IMR-90 (cell line): ENCODE measurements at regions of chr1 and their contacts with region 1.

Region 1: GRCh38 chr1:171683870-171684269 is 31.4 kb upstream of the MYOC start:
- DNase-seq: no peak
- ATAC-seq: no peak
- H3K4me3 ChIP-seq: no peak overlapping the region
- H3K27ac ChIP-seq: no peak overlapping the region
- H3K4me1 ChIP-seq: no peaks in the 10 kb centered on the region
- H3K27me3 ChIP-seq: no peaks in the 10 kb centered on the region; the same call in 1 of the 2 replicates
- CTCF ChIP-seq: no peak
- POLR2A ChIP-seq: no peak
- RAD21 ChIP-seq: no peak

Region 2: DNA sequence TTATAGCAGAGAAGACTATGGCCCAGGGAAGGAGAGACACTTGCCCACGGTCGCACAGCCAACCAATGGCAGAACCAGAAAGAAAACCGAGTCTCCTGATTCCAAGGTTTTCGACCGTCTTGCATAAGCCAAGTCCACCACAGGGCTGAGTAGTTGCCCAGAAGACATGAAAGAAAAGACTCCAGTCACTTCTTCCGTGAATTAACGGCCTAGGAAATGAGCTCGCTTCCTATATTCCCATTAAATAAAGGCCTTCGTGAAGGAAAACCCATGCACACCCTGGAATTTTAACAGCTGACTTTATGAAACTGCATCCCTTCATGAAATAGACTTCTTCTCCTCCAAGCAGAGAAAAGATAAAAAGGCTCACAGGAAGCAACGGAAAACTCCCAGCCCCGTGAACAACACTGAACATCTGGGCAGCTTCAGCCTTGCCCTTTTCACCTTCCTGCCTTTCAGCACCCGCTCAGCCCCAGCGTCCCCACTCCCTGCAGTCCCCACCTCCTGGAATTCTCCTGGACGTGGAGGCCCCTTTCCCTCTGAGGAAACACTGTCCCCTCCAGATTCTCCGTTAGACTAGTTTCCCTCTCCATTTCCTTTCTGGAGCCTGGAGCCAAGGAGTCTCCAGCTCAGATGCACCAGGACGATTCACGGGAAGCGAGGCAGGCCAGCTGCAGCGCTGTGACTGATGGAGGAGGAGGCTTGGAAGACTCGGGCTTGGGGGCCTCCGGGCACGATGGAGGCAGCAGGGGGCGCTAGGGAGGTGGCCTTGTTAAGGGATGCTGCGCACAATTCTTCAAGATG is 28.7 kb before region 1 on chr1:
- CTCF ChIA-PET with region 1: interaction called, 10 read pairs
- POLR2A ChIA-PET with region 1: no interaction called
- dilution Hi-C with region 1: no loop called
- in situ Hi-C with region 1: no loop called
- intact Hi-C with region 1: no loop called
- DNase-seq: peak; percentile 48
- ATAC-seq: peak; percentile 76
- H3K4me3 ChIP-seq: no peak overlapping the region
- H3K27ac ChIP-seq: no peak overlapping the region
- H3K4me1 ChIP-seq: peaks cover 8% of the 10 kb centered on the region
- H3K27me3 ChIP-seq: peaks cover 3% of the 10 kb centered on the region
- CTCF ChIP-seq: peak; percentile 58
- POLR2A ChIP-seq: no peak
- RAD21 ChIP-seq: peak; percentile 46

Region 3: DNA sequence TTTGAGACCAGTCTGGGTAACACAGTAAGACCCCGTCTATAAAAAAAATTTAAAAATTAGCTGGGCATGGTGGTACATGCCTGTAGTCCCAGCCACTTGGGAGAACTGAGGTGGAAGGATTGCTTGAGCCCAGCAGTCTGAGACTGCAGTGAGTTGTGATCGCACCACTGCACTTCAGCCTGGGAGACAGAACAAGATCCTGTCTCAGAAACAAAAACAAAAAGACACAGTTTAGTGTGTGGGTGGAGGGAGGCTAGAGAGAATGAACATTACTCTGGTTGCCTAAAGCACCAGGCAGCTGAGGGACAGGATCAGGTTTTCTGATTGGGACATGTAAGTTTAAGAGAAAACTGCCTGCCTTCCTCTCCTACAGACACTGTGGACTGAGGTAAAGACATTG is 15.7 kb after region 1 on chr1:
- CTCF ChIA-PET with region 1: no interaction called
- POLR2A ChIA-PET with region 1: no interaction called
- dilution Hi-C with region 1: no loop called
- in situ Hi-C with region 1: no loop called
- intact Hi-C with region 1: no loop called
- DNase-seq: peak; percentile 2
- ATAC-seq: no peak
- H3K4me3 ChIP-seq: no peak overlapping the region
- H3K27ac ChIP-seq: no peak overlapping the region
- H3K4me1 ChIP-seq: no peaks in the 10 kb centered on the region
- H3K27me3 ChIP-seq: no peaks in the 10 kb centered on the region
- CTCF ChIP-seq: no peak
- POLR2A ChIP-seq: no peak
- RAD21 ChIP-seq: no peak

Region 4: GRCh38 chr1:172343240-172344160 is 659.6 kb after region 1 on chr1:
- CTCF ChIA-PET with region 1: no interaction called
- POLR2A ChIA-PET with region 1: no interaction called
- dilution Hi-C with region 1: no loop called
- in situ Hi-C with region 1: no loop called
- intact Hi-C with region 1: no loop called
- DNase-seq: peak; percentile 91
- ATAC-seq: peak; percentile 88
- H3K4me3 ChIP-seq: peak overlapping the region; percentile 31; the same call in 1 of the 2 replicates
- H3K27ac ChIP-seq: peak overlapping the region; percentile 56; the same call in 1 of the 2 replicates
- H3K4me1 ChIP-seq: peaks cover 9% of the 10 kb centered on the region
- H3K27me3 ChIP-seq: no peaks in the 10 kb centered on the region
- CTCF ChIP-seq: no peak
- POLR2A ChIP-seq: peak; percentile 37; the same call in 1 of the 2 replicates
- RAD21 ChIP-seq: no peak